ENCODE measurements at regions of chr15 and their contacts with region 1.

Region 1: DNA sequence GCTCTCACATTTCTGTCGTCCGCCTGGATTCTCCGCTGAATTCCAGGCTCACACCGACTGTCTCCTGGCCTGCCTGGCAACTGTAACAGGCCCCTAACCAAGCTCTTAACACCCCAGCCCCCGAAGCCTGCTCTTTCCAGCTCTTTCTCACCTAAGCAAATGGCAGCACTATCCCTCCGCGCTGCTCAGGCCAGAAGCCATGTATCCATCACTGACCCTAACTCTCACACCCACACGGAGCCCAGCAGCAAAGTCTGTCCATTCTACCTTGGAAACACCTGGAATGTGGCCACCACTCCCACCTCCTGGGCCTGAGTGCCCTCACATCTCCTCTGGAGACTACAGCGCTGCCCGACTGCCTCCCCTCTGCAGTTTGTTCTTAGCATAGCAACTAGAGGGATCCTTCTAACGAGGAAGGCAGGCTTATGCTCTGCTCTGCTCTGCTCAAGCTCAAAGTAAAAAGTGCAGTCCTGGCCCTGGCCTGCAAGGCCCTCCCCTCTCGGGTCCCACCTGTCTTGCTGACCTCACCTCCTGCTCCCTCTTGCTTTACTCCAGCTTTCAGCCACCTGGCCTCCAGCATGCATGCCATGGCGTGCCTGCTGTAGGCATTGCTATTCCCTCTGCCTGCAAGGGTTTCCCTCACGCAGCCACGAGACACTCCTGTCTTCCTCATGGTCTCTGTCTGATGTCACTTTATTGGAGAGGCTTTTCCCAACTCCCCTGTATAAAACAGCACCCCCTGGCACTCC is 27.2 kb downstream of the FEM1B start:
- DNase-seq: no peak
- H3K4me3 ChIP-seq: no peak overlapping the region
- H3K27ac ChIP-seq: peak overlapping the region in 1 of 2 experiments; percentile 61; a peak in 2 of 4 replicates
- H3K4me1 ChIP-seq: no peaks in the 10 kb centered on the region; a peak in 1 of 4 replicates
- H3K27me3 ChIP-seq: no peaks in the 10 kb centered on the region
- CTCF ChIP-seq: no peak
- EP300 ChIP-seq: no peak
- RAD21 ChIP-seq: no peak

Region 2: DNA sequence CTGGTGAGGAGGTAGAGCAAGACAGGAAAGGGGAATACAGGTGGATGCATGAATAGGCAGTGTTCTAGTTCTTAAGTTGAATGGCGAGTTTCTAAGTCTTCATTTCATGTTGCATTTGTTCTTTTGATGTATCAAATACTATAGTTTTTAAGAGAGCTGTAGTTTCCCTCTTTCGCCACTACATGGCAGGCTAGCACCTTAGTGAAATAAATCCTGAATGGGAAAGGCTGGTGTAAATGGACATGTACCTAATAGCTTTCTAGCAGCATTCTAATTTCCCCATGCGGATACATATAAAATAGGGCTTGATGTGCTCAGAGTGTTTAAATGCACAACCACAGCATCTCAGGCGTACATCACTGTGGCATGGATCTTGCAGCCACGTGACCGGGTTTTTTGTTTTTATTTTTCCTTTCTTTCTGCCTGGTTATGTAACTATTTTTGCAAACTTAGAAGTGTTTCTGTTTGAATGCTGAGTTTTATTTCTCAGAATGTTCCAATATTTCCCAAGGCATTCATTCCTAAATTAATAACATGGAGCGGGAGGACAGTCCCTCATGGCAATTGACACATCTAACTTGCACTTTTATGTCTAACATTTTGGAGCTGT is 51.7 kb before region 1 on chr15:
- CTCF ChIA-PET with region 1: interaction called, 51 read pairs
- POLR2A ChIA-PET with region 1: no interaction called
- DNase-seq: peak; percentile 75
- H3K4me3 ChIP-seq: no peak overlapping the region; a peak in 1 of 4 replicates
- H3K27ac ChIP-seq: no peak overlapping the region
- H3K4me1 ChIP-seq: no peaks in the 10 kb centered on the region
- H3K27me3 ChIP-seq: no peaks in the 10 kb centered on the region
- CTCF ChIP-seq: peak; percentile 94
- EP300 ChIP-seq: no peak
- RAD21 ChIP-seq: peak; percentile 93

Region 3: GRCh38 chr15:68292157-68292781 is 12.5 kb before region 1 on chr15:
- CTCF ChIA-PET with region 1: interaction called, 50 read pairs
- POLR2A ChIA-PET with region 1: interaction called, 3 read pairs
- DNase-seq: no peak
- H3K4me3 ChIP-seq: no peak overlapping the region
- H3K27ac ChIP-seq: no peak overlapping the region
- H3K4me1 ChIP-seq: peaks cover 4 to 5% of the 10 kb centered on the region in 2 experiments; a peak in 3 of 4 replicates
- H3K27me3 ChIP-seq: no peaks in the 10 kb centered on the region
- CTCF ChIP-seq: no peak
- EP300 ChIP-seq: no peak
- RAD21 ChIP-seq: no peak

Region 4: GRCh38 chr15:68330901-68331300 is 26.1 kb after region 1 on chr15:
- CTCF ChIA-PET with region 1: interaction called, 10 read pairs
- POLR2A ChIA-PET with region 1: no interaction called
- DNase-seq: no peak
- H3K4me3 ChIP-seq: no peak overlapping the region
- H3K27ac ChIP-seq: no peak overlapping the region
- H3K4me1 ChIP-seq: peaks cover 14% of the 10 kb centered on the region in 2 experiments; a peak in 3 of 4 replicates
- H3K27me3 ChIP-seq: no peaks in the 10 kb centered on the region
- CTCF ChIP-seq: no peak
- EP300 ChIP-seq: no peak
- RAD21 ChIP-seq: no peak

Region 5: DNA sequence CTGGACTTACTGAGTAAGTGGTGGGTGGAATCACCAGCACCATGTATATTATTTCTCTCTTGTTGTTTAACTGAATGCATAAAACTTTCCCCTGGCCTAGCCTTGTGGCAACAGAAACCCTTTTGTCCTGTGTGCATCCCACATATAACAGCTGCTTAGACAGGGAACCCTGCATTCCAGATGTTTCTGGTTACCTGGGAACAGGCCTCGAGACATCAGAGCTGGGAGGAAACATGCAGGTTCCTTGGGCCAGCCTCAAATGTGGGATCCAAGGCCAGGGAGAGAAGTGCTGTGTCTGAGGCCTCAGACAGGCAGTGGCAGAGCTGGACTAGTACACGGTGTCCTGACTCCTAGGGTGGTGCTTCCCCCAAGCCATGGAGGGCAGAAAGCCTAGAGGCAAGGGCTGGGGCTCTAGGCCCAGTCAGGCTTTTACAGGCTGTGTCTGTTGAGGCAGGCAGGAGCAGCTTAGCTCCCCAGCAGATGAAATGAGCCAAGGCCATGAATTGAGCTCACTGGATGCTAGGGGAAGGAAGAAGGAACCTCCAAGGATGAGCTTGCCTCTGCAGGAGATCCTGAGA is 69.5 kb after region 1 on chr15:
- CTCF ChIA-PET with region 1: interaction called, 10 read pairs
- POLR2A ChIA-PET with region 1: no interaction called
- DNase-seq: no peak
- H3K4me3 ChIP-seq: no peak overlapping the region
- H3K27ac ChIP-seq: no peak overlapping the region
- H3K4me1 ChIP-seq: no peaks in the 10 kb centered on the region; a peak in 1 of 4 replicates
- H3K27me3 ChIP-seq: no peaks in the 10 kb centered on the region
- CTCF ChIP-seq: no peak
- EP300 ChIP-seq: no peak
- RAD21 ChIP-seq: no peak

Region 6: GRCh38 chr15:68550481-68551295 is 245.9 kb after region 1 on chr15:
- CTCF ChIA-PET with region 1: interaction called, 61 read pairs
- POLR2A ChIA-PET with region 1: no interaction called
- DNase-seq: peak; percentile 74
- H3K4me3 ChIP-seq: peak overlapping the region in 1 of 2 experiments; percentile 34; a peak in 1 of 4 replicates
- H3K27ac ChIP-seq: no peak overlapping the region
- H3K4me1 ChIP-seq: peaks cover 4 to 5% of the 10 kb centered on the region in 2 experiments; a peak in 3 of 4 replicates
- H3K27me3 ChIP-seq: no peaks in the 10 kb centered on the region
- CTCF ChIP-seq: peak; percentile 92
- EP300 ChIP-seq: no peak
- RAD21 ChIP-seq: peak; percentile 80

Region 7: DNA sequence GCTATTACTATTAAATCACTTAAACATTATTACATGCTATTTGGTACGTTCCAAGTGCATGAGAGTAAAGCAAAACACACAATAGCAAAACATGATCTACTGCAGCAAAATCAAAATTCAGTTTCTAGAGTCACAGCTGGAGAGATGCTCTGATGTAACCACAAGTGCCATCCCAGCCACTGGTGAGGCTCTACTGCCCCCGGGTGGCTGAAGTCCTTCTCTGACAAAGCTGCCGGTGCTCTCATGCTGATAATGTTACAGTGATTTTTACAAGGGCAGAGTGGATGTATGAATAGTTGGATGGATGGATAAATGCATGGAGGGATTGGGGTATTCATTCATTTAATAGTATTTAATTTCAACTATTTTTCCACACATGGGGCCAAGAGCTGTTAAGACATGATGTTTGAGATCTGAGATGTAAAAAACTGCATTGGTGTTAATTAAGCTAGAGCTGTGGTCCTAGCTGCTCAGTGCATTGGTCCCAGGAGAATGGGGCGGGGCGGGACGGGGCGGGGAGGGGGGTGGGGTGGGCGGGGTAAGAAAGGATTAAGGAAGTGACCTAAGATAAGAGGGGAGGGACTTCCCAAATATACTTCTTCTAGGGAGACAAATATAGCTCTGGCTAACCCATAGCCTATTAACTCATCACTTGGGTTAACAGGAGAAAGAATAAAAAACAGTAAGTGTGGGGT is 620.2 kb after region 1 on chr15:
- CTCF ChIA-PET with region 1: interaction called, 11 read pairs
- POLR2A ChIA-PET with region 1: no interaction called
- DNase-seq: peak; percentile 86
- H3K4me3 ChIP-seq: peak overlapping the region in 1 of 2 experiments; percentile 24; a peak in 1 of 4 replicates
- H3K27ac ChIP-seq: no peak overlapping the region
- H3K4me1 ChIP-seq: peaks cover 0 to 2% of the 10 kb centered on the region in 2 experiments; a peak in 1 of 4 replicates
- H3K27me3 ChIP-seq: peaks cover 9% of the 10 kb centered on the region; the same call in 1 of the 2 replicates
- CTCF ChIP-seq: peak; percentile 91
- EP300 ChIP-seq: no peak
- RAD21 ChIP-seq: peak; percentile 98